ENCODE measurements at regions of chr12 and their contacts with region 1.

Region 1: GRCh38 chr12:47321436-47321835 is 241.7 kb upstream of the AMIGO2 start:
- H3K4me3 Mint-ChIP-seq: no peak overlapping the region
- H3K27ac Mint-ChIP-seq: peak overlapping the region; percentile 75
- H3K4me1 Mint-ChIP-seq: peaks cover 32% of the 10 kb centered on the region
- H3K27me3 Mint-ChIP-seq: no peaks in the 10 kb centered on the region

Region 2: DNA sequence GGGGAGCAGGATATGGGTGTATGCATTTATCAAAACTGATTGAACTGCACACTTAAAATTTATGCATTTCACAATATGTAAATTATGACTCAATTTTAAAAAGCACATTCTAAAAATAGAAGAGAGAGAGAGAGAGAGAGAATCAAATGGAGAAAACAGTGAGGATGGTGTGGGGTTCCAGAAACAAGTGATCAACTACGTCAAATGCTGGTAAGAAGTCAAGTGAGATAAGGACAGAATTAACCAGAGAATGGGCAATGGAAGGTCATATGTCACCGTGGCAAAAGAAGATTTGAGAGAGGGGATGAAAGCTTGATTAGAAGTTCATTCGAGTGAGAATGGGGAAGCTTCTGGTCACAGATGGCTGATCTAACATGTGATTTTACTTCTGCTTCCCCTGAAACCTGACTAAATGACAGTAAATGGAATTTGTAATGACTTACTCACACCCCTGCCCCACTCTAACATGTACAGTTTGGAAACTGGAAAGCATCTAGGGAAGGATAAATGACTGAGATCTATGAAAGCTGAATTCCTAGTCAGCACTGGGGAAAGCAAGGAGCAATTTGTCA is 34.8 kb after region 1 on chr12:
- intact Hi-C with region 1: loop called (anchors 2 kb)
- H3K4me3 Mint-ChIP-seq: peak overlapping the region; percentile 7
- H3K27ac Mint-ChIP-seq: peak overlapping the region; percentile 95
- H3K4me1 Mint-ChIP-seq: peaks cover 70% of the 10 kb centered on the region
- H3K27me3 Mint-ChIP-seq: no peaks in the 10 kb centered on the region

Measured in dendritic cell treated with granulocyte-macrophage colony-stimulating factor and Interleukin-4, amounts not matched to agents 40 ng/mL and 50 ng/mL, for 4 days (primary cell).